ENCODE measurements at regions of chr5 and their contacts with region 1.

Region 1: DNA sequence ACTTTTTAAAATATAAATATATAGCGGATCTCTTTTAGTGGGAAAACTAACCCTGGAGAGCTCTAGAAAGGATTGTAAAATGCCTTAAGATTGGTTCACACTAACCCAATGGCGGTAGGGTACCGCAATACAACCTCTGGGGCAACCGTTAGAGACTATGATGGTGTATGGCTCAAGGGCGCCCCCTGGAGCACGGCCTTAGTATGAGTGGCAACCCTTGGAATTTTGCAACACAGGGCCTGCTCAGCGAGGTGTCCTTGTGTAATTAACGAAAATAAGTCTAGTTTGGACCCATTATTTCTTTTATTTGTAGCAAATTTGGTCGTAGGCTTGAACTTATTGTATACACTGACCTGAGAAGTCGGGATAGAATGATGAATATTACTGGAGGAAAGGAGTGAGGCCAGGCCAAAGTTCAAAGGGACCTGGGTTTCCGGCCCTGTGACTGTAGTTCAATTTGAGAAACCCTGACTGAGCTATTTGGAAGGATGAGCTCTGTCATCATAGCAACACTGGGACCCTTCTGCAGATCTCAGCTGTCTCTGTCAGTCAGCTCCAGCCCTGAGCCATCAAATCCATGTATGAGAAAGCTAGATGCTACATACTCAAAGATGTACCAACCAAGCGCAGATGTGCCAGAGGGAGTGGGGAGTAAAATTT is 54.8 kb downstream of the CAMK4 start:
- DNase-seq: peak; percentile 96
- H3K4me3 Mint-ChIP-seq: peak overlapping the region; percentile 38
- H3K27ac Mint-ChIP-seq: peak overlapping the region; percentile 83
- H3K4me1 Mint-ChIP-seq: peaks cover 67% of the 10 kb centered on the region
- H3K27me3 Mint-ChIP-seq: no peaks in the 10 kb centered on the region

Region 2: GRCh38 chr5:111004286-111004685 is 274.7 kb before region 1 on chr5:
- CTCF ChIA-PET with region 1: no interaction called
- intact Hi-C with region 1: no loop called
- DNase-seq: no peak
- H3K4me3 Mint-ChIP-seq: no peak overlapping the region
- H3K27ac Mint-ChIP-seq: no peak overlapping the region
- H3K4me1 Mint-ChIP-seq: no peaks in the 10 kb centered on the region
- H3K27me3 Mint-ChIP-seq: peaks cover 3% of the 10 kb centered on the region

Region 3: GRCh38 chr5:111092062-111092853 is 186.7 kb before region 1 on chr5 and contains the start of gene WDR36:
- CTCF ChIA-PET with region 1: no interaction called
- intact Hi-C with region 1: loop called (anchors 5 kb)
- DNase-seq: peak; percentile 92
- H3K4me3 Mint-ChIP-seq: peak within 1 kb of the TSS; percentile 99
- H3K27ac Mint-ChIP-seq: peak within 1 kb of the TSS; percentile 90
- H3K4me1 Mint-ChIP-seq: peaks cover 42% of the 10 kb centered on the region
- H3K27me3 Mint-ChIP-seq: peaks cover 8% of the 10 kb centered on the region
- total RNA-seq, gene WDR36: 34.1 to 40.3 TPM

Region 4: GRCh38 chr5:111223889-111224563 is 54.9 kb before region 1 on chr5 and contains the start of gene CAMK4:
- CTCF ChIA-PET with region 1: interaction called, 39 read pairs
- intact Hi-C with region 1: loop called (anchors 1 kb)
- DNase-seq: peak; percentile 75
- H3K4me3 Mint-ChIP-seq: peak within 1 kb of the TSS; percentile 95
- H3K27ac Mint-ChIP-seq: peak within 1 kb of the TSS; percentile 97
- H3K4me1 Mint-ChIP-seq: peaks cover 25% of the 10 kb centered on the region
- H3K27me3 Mint-ChIP-seq: no peaks in the 10 kb centered on the region
- total RNA-seq, gene CAMK4: 40.6 to 44.4 TPM

Region 5: DNA sequence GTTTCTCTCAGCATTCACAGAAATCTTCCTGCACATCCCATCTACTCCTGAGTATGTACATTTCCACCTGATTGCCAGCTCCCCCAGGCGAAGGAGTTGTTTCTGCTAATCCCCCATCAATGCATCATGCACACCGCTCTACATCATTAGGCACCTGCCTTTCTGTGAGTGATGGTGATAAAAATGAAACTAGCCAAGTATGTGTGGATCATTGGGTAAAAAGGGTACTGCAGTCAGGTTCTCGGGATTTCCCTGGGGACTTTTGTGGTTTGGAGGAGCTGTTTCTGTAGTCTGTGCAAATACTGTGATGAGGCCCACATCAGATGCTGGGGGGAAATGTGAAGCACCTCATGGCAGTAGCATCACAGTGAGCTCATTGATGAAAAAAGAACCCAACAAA is 24.4 kb before region 1 on chr5:
- CTCF ChIA-PET with region 1: interaction called, 24 read pairs
- intact Hi-C with region 1: loop called (anchors 1 kb)
- DNase-seq: peak; percentile 95
- H3K4me3 Mint-ChIP-seq: peak overlapping the region; percentile 46
- H3K27ac Mint-ChIP-seq: peak overlapping the region; percentile 90
- H3K4me1 Mint-ChIP-seq: peaks cover 78% of the 10 kb centered on the region
- H3K27me3 Mint-ChIP-seq: no peaks in the 10 kb centered on the region

Region 6: DNA sequence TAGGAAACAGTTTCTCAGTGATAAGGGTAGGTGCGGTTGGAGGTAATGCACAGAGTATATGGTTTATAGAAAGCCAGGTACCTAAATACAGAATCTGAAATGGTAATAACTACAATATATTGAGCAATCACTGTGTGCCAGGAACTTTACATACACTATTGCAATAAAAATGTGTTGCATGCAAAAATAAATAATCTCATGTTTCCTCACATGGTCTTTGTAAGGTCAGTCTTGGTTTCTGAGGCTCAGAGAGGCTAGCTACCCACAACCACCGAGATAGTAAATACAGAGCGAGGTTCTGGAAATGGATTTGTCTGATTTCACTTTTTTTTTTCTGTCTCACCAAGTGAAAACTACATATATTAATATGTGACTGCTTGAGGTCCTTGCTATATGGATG is 74.1 kb after region 1 on chr5:
- CTCF ChIA-PET with region 1: no interaction called
- intact Hi-C with region 1: no loop called
- DNase-seq: no peak
- H3K4me3 Mint-ChIP-seq: no peak overlapping the region
- H3K27ac Mint-ChIP-seq: no peak overlapping the region
- H3K4me1 Mint-ChIP-seq: peaks cover 26% of the 10 kb centered on the region
- H3K27me3 Mint-ChIP-seq: no peaks in the 10 kb centered on the region

Region 7: DNA sequence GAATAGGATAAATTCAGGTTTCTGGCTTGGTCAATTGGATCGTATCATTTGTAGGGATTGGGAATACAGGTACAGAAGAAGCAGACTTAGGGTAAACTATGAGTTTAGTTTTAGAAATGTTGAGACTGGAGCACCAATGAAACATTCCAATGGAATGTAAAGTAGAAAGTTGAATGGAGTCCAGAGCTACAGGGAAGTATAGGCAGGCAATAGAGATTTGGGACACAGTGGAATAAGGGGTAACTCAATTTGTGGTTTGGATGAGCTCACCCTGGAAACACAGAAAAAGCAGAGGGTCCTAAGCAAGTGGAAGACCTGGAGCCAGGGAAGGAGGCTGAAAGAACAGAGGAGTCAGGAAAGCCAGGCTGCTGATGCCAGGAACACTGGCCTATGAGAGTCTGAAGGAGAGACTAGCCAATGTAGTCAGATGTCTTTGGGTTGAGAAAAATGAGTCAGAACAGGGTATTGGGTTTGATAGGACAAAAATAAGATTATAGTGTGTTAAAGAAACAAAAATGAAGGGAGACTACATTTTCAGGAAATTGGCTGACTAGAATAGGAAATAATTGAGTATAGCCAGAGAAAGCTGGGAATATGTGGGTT is 160.6 kb after region 1 on chr5:
- CTCF ChIA-PET with region 1: no interaction called
- intact Hi-C with region 1: no loop called
- DNase-seq: no peak
- H3K4me3 Mint-ChIP-seq: no peak overlapping the region
- H3K27ac Mint-ChIP-seq: no peak overlapping the region
- H3K4me1 Mint-ChIP-seq: peaks cover 12% of the 10 kb centered on the region
- H3K27me3 Mint-ChIP-seq: no peaks in the 10 kb centered on the region

Region 8: GRCh38 chr5:111478266-111478665 is 199.3 kb after region 1 on chr5:
- CTCF ChIA-PET with region 1: interaction called, 5 read pairs
- intact Hi-C with region 1: loop called (anchors 5 kb)
- DNase-seq: no peak
- H3K4me3 Mint-ChIP-seq: no peak overlapping the region
- H3K27ac Mint-ChIP-seq: no peak overlapping the region
- H3K4me1 Mint-ChIP-seq: no peaks in the 10 kb centered on the region
- H3K27me3 Mint-ChIP-seq: no peaks in the 10 kb centered on the region

Region 9: DNA sequence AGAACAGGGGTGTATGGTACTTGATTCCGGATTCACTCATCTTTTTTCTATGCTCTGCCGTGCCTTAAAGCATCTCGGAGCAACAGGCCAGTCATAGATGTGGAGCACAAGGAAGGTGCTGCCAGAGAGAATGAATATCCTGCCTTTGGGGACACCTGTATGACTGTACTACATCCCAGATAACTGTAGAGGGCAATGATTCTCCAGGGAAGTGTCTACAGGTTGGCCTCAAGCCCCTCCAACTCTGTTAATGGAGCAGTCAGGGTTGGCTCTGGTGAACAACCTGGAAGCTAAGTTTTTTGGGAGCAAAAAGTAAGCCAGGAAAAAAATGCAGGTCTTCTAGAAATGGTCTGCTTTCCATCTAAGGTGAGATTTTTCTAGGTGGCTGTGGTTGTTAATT is 407.0 kb after region 1 on chr5:
- CTCF ChIA-PET with region 1: no interaction called
- intact Hi-C with region 1: no loop called
- DNase-seq: no peak
- H3K4me3 Mint-ChIP-seq: no peak overlapping the region
- H3K27ac Mint-ChIP-seq: no peak overlapping the region
- H3K4me1 Mint-ChIP-seq: no peaks in the 10 kb centered on the region
- H3K27me3 Mint-ChIP-seq: no peaks in the 10 kb centered on the region

Region 10: DNA sequence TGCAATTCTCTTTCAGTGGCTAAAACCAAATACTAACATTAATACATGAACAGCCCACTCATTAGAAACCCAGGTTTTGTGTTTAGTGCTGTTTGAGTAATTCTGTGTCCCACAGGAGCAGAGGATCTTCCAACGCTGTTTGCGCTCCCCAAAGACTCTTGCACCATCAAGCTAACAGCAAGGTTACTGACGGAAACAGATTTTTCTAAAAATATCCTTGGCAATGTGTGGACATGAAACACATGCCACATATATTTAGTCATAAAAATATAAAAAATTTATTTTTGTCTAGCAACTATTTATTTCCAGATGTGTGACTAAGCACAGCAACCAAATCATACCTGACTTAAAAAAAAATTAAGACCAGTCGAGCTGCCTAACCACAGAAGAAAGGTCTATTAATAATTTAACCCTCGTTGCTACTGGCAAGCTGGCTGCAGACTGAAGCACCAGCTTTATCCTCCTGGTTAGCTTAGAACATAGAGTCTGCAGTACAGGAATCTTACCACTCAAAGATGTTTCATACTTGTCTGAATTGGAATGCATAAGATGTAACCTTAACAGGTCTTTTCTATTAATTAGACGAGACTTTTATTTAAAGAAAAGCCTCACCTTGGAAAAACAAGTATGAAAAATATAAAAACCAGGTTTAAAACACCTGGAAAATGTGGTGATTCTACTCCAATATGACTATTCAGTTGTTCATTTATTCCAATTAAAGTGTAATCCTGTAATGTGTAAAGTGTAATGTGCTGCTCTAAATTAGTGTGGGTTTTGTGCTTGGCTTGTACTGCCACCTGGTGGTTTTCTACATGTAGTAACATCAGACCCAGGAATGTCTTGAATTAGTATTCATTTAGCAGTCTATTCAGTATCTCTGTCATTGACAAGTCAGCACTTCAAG is 867.6 kb after region 1 on chr5:
- CTCF ChIA-PET with region 1: no interaction called
- intact Hi-C with region 1: loop called (anchors 2 kb)
- DNase-seq: peak; percentile 81
- H3K4me3 Mint-ChIP-seq: no peak overlapping the region
- H3K27ac Mint-ChIP-seq: no peak overlapping the region
- H3K4me1 Mint-ChIP-seq: no peaks in the 10 kb centered on the region
- H3K27me3 Mint-ChIP-seq: peaks cover 3% of the 10 kb centered on the region